Activated B cell treated with CpG ODN at 0.5 μM for 24 hours (primary cell): ENCODE measurements at regions of chr9 and their contacts with region 1.

Region 1: GRCh38 chr9:130824643-130825350 is 10.3 kb upstream of the ABL1 start:
- DNase-seq: no peak
- ATAC-seq: no peak
- H3K4me3 Mint-ChIP-seq: no peak overlapping the region
- H3K27ac Mint-ChIP-seq: no peak overlapping the region
- H3K4me1 Mint-ChIP-seq: peaks cover 2% of the 10 kb centered on the region
- H3K27me3 Mint-ChIP-seq: no peaks in the 10 kb centered on the region
- CTCF ChIP-seq: no peak

Region 2: DNA sequence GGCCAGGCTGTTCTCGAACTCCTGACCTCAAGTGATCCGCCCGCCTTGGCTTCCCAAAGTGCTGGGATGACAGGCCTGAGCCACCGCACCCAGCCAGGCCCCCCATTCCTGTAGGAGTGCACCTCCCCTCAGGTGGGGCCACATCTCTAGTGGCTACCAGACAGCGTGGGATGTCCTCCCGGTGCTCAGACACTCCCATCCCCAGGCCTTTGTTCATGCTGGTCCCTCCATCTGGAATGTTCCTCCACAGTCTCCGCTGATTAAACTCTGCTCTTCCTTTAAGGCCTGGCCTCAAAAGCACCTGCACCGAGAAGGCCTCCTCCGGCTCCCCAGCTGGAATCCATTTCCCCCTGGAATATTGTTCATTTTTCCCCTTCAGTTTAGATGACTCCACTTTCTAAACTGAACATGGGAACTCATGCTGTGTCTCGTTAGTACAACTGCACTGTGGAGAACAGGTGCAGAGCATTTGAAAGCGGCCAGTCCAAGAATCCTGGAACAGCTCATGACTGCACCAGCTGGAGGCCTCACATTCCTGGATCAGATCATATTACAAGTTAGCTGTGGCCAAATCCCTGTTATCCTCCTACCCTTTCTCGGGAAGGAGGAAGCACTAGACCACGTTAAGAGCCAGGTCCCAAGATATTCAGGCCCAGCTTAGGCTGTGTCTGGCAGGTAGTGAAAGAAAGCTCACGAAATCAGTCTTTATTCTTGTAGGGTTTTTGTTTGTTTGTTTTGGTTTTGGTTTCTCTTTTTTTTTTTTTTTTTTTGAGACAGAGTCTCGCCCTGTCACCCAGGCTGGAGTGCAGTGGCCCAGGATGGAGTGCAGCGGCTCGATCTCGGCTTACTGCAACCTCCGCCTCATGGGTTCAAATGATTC is 558.3 kb after region 1 on chr9:
- CTCF ChIA-PET with region 1: no interaction called
- POLR2A ChIA-PET with region 1: interaction called, 10 read pairs
- intact Hi-C with region 1: no loop called
- DNase-seq: no peak
- ATAC-seq: no peak
- H3K4me3 Mint-ChIP-seq: no peak overlapping the region
- H3K27ac Mint-ChIP-seq: no peak overlapping the region
- H3K4me1 Mint-ChIP-seq: no peaks in the 10 kb centered on the region
- H3K27me3 Mint-ChIP-seq: no peaks in the 10 kb centered on the region
- CTCF ChIP-seq: no peak